ENCODE measurements at regions of chr2 and their contacts with region 1.

Region 1: GRCh38 chr2:70124983-70125480 is 37.8 kb downstream of the PCBP1 start:
- DNase-seq: peak; percentile 76
- ATAC-seq: peak; percentile 66
- H3K4me3 Mint-ChIP-seq: peak overlapping the region; percentile 93
- H3K27ac Mint-ChIP-seq: peak overlapping the region; percentile 100
- H3K4me1 Mint-ChIP-seq: peaks cover 81% of the 10 kb centered on the region
- H3K27me3 Mint-ChIP-seq: no peaks in the 10 kb centered on the region
- CTCF ChIP-seq: no peak

Region 2: DNA sequence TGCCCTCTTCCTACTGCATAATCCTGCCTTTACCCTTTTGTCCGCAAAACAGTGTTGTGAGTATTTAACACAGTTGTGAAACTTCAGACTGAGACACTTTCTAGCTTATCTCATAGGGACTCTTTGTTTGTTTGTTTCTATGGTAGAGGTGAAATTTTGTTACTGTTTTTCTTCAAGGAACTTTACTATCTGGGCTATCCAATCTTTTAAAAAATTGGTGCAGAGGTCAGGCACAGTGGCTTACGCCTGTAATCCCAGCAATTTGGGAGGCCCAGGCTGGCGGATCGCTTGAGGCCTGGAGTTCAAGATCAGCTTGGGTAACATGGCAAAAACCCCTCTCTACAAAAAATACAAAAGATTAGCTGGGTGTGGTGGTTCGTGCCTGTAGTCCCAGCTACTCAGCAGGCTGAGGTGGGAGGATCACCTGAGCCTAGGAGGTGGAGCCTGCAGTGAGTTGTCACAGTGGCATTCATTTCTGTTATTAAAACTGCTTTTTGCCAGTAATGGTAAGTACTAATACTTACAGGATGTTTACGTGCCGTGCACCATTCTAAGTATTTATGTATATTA is 276.7 kb before region 1 on chr2:
- CTCF ChIA-PET with region 1: no interaction called
- POLR2A ChIA-PET with region 1: no interaction called
- intact Hi-C with region 1: no loop called
- DNase-seq: no peak
- ATAC-seq: no peak
- H3K4me3 Mint-ChIP-seq: no peak overlapping the region
- H3K27ac Mint-ChIP-seq: no peak overlapping the region
- H3K4me1 Mint-ChIP-seq: no peaks in the 10 kb centered on the region
- H3K27me3 Mint-ChIP-seq: no peaks in the 10 kb centered on the region
- CTCF ChIP-seq: no peak

Region 3: GRCh38 chr2:70070541-70071268 is 54.3 kb before region 1 on chr2:
- CTCF ChIA-PET with region 1: interaction called, 4 read pairs
- POLR2A ChIA-PET with region 1: interaction called, 33 read pairs
- intact Hi-C with region 1: loop called (anchors 2 kb)
- DNase-seq: no peak
- ATAC-seq: peak; percentile 92
- H3K4me3 Mint-ChIP-seq: peak overlapping the region; percentile 64
- H3K27ac Mint-ChIP-seq: peak overlapping the region; percentile 83
- H3K4me1 Mint-ChIP-seq: peaks cover 32% of the 10 kb centered on the region
- H3K27me3 Mint-ChIP-seq: no peaks in the 10 kb centered on the region
- CTCF ChIP-seq: peak; percentile 33

Region 4: GRCh38 chr2:70086838-70087701 is 38.0 kb before region 1 on chr2 and contains the start of gene PCBP1:
- CTCF ChIA-PET with region 1: interaction called, 3 read pairs
- POLR2A ChIA-PET with region 1: interaction called, 719 read pairs
- intact Hi-C with region 1: loop called (anchors 1 kb)
- DNase-seq: peak; percentile 96
- ATAC-seq: peak; percentile 54
- H3K4me3 Mint-ChIP-seq: peak within 1 kb of the TSS; percentile 96
- H3K27ac Mint-ChIP-seq: peak within 1 kb of the TSS; percentile 100
- H3K4me1 Mint-ChIP-seq: peaks cover 70% of the 10 kb centered on the region
- H3K27me3 Mint-ChIP-seq: no peaks in the 10 kb centered on the region
- CTCF ChIP-seq: no peak
- total RNA-seq, gene PCBP1: 370 and 379 TPM in 2 replicates

Region 5: DNA sequence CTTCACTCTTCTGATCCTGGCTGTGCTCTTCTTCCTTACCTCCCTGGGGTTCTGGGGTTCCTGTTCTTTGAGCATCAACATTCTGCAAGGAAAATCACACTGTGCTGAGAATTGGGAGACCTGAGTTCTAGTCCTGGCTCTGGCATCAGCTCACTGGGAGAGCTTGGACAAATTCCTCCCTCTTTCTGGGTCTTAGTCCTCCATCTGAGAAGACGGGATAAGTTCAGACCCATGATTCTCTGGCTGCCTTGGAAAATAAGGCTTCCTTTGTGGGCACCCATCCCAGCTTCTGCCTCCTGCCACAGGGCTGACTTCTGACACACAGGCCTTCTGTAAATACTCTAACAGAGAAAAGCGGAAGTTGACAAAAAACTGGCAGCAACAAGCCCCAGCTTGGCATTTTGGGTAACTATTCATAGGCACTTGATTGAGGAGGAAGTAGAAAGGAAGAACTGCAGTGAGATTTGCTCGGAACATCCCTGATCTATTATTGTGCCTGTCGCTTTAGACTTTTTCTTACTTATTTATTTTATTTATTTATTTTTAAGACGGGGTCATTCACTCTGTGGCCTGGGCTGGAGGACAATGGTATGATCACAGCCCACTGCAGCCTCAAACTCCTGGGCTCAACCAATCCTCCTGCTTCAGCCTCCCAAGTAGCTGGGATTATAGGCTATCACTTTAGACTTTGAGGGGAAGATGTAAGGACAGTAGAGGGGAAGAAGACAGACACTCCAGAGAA is 29.9 kb before region 1 on chr2:
- CTCF ChIA-PET with region 1: interaction called, 10 read pairs
- POLR2A ChIA-PET with region 1: interaction called, 719 read pairs
- intact Hi-C with region 1: loop called (anchors 1 kb)
- DNase-seq: peak; percentile 36
- ATAC-seq: peak; percentile 95
- H3K4me3 Mint-ChIP-seq: peak overlapping the region; percentile 84
- H3K27ac Mint-ChIP-seq: peak overlapping the region; percentile 97
- H3K4me1 Mint-ChIP-seq: peaks cover 54% of the 10 kb centered on the region
- H3K27me3 Mint-ChIP-seq: no peaks in the 10 kb centered on the region
- CTCF ChIP-seq: no peak

Region 6: DNA sequence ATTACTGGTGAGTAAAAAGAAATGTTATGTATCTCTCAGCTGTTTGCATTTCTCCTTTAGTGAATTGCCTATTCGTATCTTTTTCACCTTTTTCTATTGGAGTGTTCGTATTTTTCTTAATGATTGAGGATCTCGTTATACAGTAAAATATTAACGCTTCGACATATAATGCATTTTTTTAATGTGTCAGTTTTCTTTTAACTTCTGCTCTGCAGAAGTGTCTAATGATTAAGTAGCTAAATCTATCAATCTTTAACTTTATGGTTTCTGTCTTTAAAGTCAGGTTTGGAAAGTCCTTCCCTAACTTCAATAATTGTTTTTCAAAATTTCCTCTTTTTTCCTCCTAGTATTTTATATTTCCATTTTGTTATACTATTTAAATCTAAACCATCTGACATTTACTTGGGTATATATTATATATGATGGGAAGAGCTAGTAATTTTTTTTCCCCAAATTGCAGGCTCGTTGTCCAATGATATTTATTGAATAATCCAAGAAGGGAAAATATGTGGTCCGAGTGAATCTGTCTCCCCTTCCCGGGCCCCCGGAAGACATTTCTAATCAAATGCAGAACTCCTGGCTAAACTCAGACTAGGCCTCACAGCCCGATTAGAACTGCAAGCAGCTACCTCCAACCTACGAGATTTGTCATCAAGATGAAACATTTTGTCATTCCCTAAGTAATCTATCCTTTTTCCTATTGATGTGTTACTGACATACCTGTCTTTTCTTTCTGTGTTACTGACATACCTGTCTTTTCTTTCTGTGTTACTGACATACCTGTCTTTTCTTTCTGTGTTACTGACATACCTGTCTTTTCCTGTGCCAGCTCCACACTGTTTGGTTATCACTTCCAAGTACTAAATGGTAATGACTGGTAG is 20.6 kb before region 1 on chr2:
- CTCF ChIA-PET with region 1: interaction called, 4 read pairs
- POLR2A ChIA-PET with region 1: interaction called, 103 read pairs
- intact Hi-C with region 1: loop called (anchors 1 kb)
- DNase-seq: no peak
- ATAC-seq: no peak
- H3K4me3 Mint-ChIP-seq: peak overlapping the region; percentile 80
- H3K27ac Mint-ChIP-seq: peak overlapping the region; percentile 94
- H3K4me1 Mint-ChIP-seq: peaks cover 55% of the 10 kb centered on the region
- H3K27me3 Mint-ChIP-seq: no peaks in the 10 kb centered on the region
- CTCF ChIP-seq: no peak

Measured in activated B cell treated with CpG ODN at 0.5 μM for 24 hours (primary cell).